ENCODE measurements at regions of chr13 and their contacts with region 1.

Region 1: GRCh38 chr13:107365466-107366215 is 797.7 kb upstream of the ARGLU1 start:
- DNase-seq: peak; percentile 61
- H3K4me3 ChIP-seq: no peak overlapping the region
- H3K27ac ChIP-seq: no peak overlapping the region
- H3K4me1 ChIP-seq: peaks cover 47% of the 10 kb centered on the region
- H3K27me3 ChIP-seq: no peaks in the 10 kb centered on the region

Region 2: GRCh38 chr13:105937451-105937850 is 1428.2 kb before region 1 on chr13:
- in situ Hi-C with region 1: no loop called
- DNase-seq: no peak
- H3K4me3 ChIP-seq: no peak overlapping the region
- H3K27ac ChIP-seq: no peak overlapping the region
- H3K4me1 ChIP-seq: no peaks in the 10 kb centered on the region; the same call in 1 of the 2 replicates
- H3K27me3 ChIP-seq: no peaks in the 10 kb centered on the region

Region 3: DNA sequence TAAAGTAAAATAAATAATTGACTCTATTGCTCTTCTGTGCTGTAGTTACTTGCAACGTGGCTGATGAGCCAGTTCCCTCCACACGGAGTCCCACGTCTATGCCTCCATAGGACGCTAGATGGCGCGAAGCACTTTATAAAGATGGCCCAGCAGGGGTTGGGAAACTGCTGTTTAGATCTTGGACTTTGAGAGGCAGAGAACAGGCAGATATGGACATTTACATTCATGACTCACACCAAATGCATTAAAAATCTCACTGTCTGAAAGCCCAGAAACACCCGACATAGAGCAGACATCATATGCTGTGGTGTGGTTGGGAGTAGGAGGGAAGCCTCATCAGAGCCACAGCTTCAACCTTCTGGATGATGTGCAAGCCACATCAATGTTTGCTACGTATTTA is 154.6 kb before region 1 on chr13:
- in situ Hi-C with region 1: loop called (anchors 10 kb)
- DNase-seq: peak; percentile 96
- H3K4me3 ChIP-seq: peak overlapping the region; percentile 64
- H3K27ac ChIP-seq: peak overlapping the region; percentile 50
- H3K4me1 ChIP-seq: peaks cover 20% of the 10 kb centered on the region
- H3K27me3 ChIP-seq: no peaks in the 10 kb centered on the region